Head of caudate nucleus (tissue), 42 donors: ENCODE measurements at regions of chr10 and their contacts with region 1.

Region 1: DNA sequence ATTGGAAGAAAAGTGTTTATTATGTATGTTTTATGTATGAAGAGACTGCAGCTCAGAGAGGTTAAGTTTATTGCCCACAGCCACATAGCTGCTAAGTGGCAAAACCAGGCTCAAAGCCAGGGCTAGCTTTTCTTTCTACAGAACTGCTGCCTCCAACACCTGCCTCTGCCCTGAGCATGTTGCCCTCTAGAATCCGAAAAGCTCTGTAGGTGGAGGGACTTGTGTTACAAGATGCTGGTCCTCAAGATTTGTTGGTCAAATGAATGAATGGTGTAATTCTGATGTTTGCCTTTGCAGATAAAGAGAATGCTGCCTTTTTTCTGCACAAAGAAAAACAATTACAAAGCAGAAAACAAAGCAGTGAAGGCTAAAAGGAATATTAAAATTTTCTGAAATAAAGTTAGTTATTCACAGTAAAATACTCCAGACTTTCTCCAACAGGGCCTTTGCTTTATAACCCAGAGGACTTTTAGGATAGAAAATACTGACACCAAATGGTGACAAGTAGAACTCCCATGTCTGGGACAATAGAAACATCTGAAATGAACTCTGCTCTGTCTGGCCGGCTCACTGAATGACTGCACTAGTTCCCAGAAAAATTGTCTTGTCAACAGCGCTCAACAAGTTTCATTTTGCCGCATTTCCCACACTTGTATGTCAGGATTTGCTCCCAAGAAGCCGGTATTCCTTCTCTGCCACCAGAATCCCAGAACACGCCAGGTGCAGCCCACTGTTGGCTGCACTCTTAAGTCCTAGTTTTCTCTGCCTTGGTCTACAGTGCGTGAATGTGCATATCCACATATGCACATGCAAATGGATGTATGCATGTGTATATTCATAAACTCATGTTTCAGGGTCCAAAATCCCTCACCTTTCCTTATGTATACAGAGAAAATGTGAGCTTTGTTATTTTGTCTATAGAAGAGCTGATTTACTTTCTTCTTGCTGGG is 11.0 kb upstream of the DNTT start:
- DNase-seq: peak in 28 of 42 donors; percentile 7 to 61 (median 26)

Region 2: GRCh38 chr10:96017191-96017687 is 276.0 kb before region 1 on chr10:
- intact Hi-C with region 1: loop called (anchors 10 kb)
- DNase-seq: peak in 17 of 42 donors; percentile 6 to 73 (median 33)

Region 3: DNA sequence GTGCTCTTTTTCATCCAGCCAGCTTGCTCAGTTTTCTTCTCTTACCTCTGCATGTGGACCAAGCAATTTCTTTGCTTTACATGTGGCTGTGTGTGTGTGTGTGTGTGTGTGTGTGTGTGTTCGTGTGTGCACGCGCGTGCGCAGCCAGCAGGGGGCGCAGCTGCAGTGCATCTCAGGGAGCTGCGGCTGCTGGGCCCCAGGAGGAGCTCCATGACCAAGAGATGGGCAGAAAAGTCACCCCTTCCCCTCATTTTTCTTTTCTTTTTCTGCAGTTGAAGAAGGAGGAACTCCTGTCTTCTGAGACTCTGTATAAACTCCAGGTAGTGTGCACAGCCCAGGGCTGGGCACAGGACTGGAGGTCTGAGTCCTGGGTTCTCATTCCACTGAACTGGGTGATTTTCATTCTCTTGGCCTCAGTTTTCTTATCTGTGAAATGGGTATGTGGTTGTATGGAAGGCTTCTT is 63.6 kb before region 1 on chr10:
- intact Hi-C with region 1: loop called (anchors 10 kb)
- DNase-seq: peak; percentile 35 to 86 (median 70)